Head of caudate nucleus (tissue), 42 donors: ENCODE measurements at regions of chr3 and their contacts with region 1.

Region 1: GRCh38 chr3:129490242-129491045 is 38.0 kb upstream of the RHO start:
- DNase-seq: peak; percentile 74 to 96 (median 88)

Region 2: GRCh38 chr3:128775912-128776542 is 714.4 kb before region 1 on chr3:
- intact Hi-C with region 1: no loop called
- DNase-seq: no peak

Region 3: DNA sequence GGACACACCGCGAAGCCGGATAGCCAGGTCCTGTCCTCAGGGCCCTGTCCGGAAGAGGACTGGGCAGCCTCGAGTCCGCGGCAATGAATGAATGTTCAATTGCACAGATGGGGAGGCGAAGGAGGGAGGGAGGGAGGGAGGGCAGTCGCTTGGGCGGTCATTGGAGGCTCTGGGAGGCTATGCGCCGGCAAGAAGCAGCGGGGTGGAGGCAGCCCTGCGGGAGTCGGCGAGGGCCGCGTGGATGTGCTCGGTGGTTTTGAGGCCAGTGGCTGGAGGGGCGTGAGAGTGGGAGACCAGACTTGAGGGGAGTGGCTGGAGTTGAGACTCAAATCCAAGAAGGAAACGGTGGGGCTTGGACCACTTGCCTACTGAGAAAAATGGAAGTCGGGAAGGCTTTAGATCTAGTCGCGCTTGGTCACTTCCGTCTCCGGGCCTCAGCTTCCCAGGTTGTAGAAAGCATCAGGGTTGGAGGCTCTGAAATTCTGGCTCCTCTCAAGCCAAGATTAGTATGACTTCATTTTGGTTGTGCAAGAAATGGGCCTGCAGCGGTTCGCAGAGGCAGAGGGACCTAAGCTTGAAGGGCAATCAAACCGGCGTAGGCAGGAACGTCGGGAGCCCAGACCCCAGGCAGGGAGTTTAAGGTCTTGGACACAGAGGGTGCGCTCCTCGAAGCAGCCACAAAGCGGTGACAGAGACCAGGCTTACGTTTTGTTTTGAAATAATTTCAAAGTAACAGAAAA is 137.2 kb after region 1 on chr3:
- intact Hi-C with region 1: loop called (anchors 10 kb)
- DNase-seq: peak; percentile 65 to 89 (median 78)

Region 4: GRCh38 chr3:129702934-129703712 is 212.7 kb after region 1 on chr3:
- intact Hi-C with region 1: no loop called
- DNase-seq: no peak

Region 5: DNA sequence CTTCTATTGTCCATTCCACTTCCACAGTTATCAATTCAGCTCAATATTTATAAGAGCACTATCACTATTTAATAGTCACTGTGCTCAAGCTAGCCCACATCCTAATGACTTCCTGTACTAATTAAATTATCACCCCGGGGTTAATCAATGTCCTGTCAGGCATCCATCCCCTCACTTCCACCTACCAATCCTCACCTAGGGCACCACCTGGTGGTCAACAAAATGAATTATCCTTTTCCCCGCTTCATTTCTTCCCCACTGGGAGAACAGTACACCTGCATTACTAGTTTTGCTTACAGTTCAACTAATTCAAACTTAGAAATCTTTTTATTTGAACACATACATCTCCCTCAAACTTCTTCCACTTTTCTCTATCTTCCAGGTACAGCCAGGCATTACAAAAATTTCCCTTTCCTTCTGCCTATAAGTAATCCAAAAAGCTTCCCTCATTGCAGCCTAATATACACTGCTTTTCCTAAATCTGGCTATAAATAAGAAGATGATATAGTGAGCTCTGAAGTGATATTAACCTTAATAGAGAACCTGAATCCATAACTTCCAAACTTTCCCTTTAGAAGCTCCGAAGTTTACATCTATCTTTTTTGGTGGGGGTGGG is 334.6 kb after region 1 on chr3:
- intact Hi-C with region 1: loop called (anchors 10 kb)
- DNase-seq: peak in 29 of 42 donors; percentile 18 to 84 (median 51)

Region 6: DNA sequence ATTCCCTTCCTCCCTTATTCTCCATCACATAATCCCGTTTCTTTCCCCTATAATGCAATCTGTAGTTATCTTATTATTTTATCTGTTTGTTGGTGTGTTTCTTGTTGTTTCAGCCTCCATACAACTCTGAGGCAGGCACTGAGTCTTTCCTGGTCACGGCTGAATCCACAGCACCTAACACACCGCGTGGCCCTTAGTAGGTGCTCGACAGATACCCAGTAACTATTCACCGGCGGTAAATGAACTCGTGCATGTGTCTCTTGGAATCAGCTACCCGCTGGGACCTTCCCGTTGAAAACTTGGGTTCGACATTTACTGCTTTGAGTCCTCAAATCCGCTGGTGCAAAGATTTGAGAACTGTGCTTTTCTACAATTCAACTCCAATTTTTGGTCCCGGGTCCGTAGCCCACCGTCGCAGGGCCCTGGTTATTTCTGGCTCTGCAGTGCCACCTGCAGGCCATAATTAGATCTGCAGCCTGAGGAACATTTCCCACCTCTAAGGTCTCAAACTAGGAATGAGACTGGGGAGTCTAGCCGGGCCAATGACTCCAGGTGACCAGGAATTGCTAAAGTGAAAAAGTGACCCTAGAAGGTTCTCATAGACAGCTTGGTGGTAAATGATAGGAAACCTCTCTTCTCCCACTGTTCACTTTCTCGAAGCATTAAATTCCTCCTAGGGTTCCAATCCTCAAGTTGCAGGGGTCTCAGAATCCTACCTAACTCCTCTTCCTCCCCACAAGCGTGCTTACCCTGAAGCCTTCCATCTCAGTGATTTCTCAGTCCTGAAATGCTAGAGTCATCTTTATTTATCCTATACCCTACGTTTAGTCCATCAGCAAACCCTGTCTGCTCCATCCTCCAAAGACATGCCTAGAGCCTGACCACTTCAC is 444.0 kb after region 1 on chr3:
- intact Hi-C with region 1: loop called (anchors 10 kb)
- DNase-seq: peak in 37 of 42 donors; percentile 11 to 79 (median 48)